Breast epithelium (tissue), 4 donors: ENCODE measurements at regions of chr2 and their contacts with region 1.

Region 1: GRCh38 chr2:193556766-193557470 is 1362.2 kb upstream of the TMEFF2 start:
- DNase-seq: no peak
- H3K4me3 ChIP-seq: no peak overlapping the region
- H3K27ac ChIP-seq: no peak overlapping the region
- H3K4me1 ChIP-seq: no peaks in the 10 kb centered on the region
- H3K27me3 ChIP-seq: no peaks in the 10 kb centered on the region
- CTCF ChIP-seq: no peak
- POLR2A ChIP-seq: no peak

Region 2: DNA sequence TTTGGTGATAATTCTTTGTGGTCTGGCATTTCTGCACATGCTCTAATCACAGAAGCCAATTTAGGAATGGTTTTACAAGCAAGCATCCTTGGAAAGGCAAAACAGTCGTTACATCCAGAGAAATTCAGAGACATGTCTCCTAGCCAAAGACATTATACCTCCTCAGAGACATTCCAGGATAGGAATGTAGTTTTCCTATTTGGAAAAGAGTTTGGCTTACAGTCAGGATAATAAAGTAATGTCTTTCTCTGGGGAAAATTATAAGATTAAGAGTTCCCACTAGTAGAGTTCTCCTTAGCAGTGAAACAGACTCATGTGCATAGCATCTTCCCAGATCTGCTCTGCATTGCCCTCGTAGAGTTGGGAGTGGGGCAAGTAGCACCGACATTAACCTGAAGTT is 608.6 kb before region 1 on chr2:
- intact Hi-C with region 1: no loop called
- DNase-seq: no peak
- H3K4me3 ChIP-seq: no peak overlapping the region
- H3K27ac ChIP-seq: no peak overlapping the region
- H3K4me1 ChIP-seq: no peaks in the 10 kb centered on the region
- H3K27me3 ChIP-seq: no peaks in the 10 kb centered on the region
- CTCF ChIP-seq: no peak
- POLR2A ChIP-seq: no peak

Region 3: DNA sequence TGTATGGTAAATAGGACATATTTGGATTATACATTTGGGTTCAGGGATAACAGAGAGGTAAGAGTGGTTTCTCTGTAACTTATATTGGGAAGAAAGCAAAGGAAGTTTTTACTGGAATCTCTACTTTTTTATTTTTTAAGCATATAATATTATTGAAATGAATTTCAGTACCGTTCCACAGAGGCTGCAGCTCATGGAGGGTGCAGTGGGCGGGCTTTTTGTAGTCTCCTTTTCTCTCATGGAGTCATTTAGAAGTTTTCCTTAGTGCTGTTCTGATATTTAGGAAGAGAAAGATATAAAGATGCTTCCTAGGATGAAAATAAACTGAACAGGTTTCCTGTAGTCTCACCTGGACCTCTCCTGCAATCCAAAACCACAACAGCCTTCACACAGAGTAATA is 208.9 kb before region 1 on chr2:
- intact Hi-C with region 1: no loop called
- DNase-seq: no peak
- H3K4me3 ChIP-seq: peak overlapping the region; percentile 26 to 63 (median 39)
- H3K27ac ChIP-seq: no peak overlapping the region
- H3K4me1 ChIP-seq: no peaks in the 10 kb centered on the region
- H3K27me3 ChIP-seq: no peaks in the 10 kb centered on the region
- CTCF ChIP-seq: no peak
- POLR2A ChIP-seq: no peak

Region 4: GRCh38 chr2:193505620-193506019 is 51.3 kb before region 1 on chr2:
- intact Hi-C with region 1: no loop called
- DNase-seq: no peak
- H3K4me3 ChIP-seq: no peak overlapping the region
- H3K27ac ChIP-seq: no peak overlapping the region
- H3K4me1 ChIP-seq: no peaks in the 10 kb centered on the region
- H3K27me3 ChIP-seq: no peaks in the 10 kb centered on the region
- CTCF ChIP-seq: no peak
- POLR2A ChIP-seq: no peak

Region 5: DNA sequence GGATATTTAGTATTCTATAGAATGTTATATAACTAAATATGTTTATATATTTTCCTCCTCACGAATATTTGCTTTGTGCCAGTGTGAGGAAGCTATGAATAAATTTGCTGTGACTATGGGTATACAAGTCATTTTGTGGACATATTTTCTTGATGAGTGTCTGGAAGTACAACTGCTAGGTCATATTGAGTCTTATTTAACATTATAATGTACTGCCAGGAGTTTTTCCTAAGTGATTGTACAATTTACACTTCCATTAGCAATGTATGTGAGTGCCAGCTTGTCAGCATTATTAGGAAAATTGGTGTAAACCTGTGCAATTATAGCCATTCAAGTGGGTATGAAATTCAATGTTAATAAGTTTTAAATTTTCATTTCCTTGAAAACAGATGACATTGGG is 33.3 kb before region 1 on chr2:
- intact Hi-C with region 1: loop called (anchors 2 kb)
- DNase-seq: no peak
- H3K4me3 ChIP-seq: no peak overlapping the region
- H3K27ac ChIP-seq: no peak overlapping the region
- H3K4me1 ChIP-seq: no peaks in the 10 kb centered on the region
- H3K27me3 ChIP-seq: no peaks in the 10 kb centered on the region
- CTCF ChIP-seq: no peak
- POLR2A ChIP-seq: no peak